ENCODE measurements at regions of chr12 and their contacts with region 1.

Region 1: GRCh38 chr12:120356567-120357030 is 12.4 kb downstream of the MSI1 start:
- DNase-seq: peak; percentile 81
- ATAC-seq: peak; percentile 93
- H3K4me3 ChIP-seq: no peak overlapping the region
- H3K27ac ChIP-seq: no peak overlapping the region
- H3K4me1 ChIP-seq: no peaks in the 10 kb centered on the region
- H3K27me3 ChIP-seq: peaks cover 26% of the 10 kb centered on the region
- CTCF ChIP-seq: peak; percentile 91
- POLR2A ChIP-seq: no peak
- RAD21 ChIP-seq: peak; percentile 90

Region 2: DNA sequence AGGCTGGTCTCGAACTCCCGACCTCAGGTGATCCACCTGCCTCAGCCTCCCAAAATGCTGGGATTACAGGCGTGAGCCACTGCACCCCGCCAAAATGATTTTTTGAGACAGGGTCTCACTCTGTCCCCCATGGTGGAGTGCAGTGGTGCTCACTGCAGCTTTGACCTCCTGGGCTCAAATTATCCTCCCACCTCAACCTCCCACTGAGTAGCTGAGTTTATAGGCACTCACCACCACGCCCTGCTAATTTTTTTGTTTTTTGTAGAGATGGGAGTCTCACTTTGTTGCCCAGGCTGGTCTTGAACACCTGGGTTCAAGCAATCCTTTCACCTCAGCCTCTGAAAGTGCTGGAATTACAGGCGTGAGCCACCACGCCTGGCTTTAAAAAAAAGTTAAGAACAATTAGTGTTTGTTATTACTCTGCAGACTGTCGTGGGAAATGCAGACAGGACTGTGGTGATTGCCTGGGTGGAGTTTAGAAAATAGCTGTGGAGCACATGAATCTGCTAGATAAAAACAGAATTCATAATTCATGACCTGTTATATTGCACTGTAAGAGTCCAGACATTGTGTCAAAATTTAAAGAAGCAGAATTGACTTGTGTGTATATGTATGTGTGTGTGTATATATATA is 72.1 kb after region 1 on chr12:
- CTCF ChIA-PET with region 1: interaction called, 15 read pairs
- POLR2A ChIA-PET with region 1: no interaction called
- dilution Hi-C with region 1: no loop called
- in situ Hi-C with region 1: no loop called
- intact Hi-C with region 1: loop called (anchors 1 kb)
- DNase-seq: no peak
- ATAC-seq: no peak
- H3K4me3 ChIP-seq: no peak overlapping the region
- H3K27ac ChIP-seq: no peak overlapping the region
- H3K4me1 ChIP-seq: no peaks in the 10 kb centered on the region
- H3K27me3 ChIP-seq: peaks cover 25% of the 10 kb centered on the region
- CTCF ChIP-seq: no peak
- POLR2A ChIP-seq: no peak
- RAD21 ChIP-seq: no peak